ENCODE measurements at regions of chr3 and their contacts with region 1.

Region 1: GRCh38 chr3:146065573-146066006 is 95.4 kb downstream of the PLOD2 start:
- DNase-seq: no peak
- H3K4me3 ChIP-seq: no peak overlapping the region
- H3K27ac ChIP-seq: no peak overlapping the region
- H3K4me1 ChIP-seq: no peaks in the 10 kb centered on the region
- H3K27me3 ChIP-seq: no peaks in the 10 kb centered on the region
- CTCF ChIP-seq: peak; percentile 58 to 73 (median 70)
- POLR2A ChIP-seq: no peak

Region 2: DNA sequence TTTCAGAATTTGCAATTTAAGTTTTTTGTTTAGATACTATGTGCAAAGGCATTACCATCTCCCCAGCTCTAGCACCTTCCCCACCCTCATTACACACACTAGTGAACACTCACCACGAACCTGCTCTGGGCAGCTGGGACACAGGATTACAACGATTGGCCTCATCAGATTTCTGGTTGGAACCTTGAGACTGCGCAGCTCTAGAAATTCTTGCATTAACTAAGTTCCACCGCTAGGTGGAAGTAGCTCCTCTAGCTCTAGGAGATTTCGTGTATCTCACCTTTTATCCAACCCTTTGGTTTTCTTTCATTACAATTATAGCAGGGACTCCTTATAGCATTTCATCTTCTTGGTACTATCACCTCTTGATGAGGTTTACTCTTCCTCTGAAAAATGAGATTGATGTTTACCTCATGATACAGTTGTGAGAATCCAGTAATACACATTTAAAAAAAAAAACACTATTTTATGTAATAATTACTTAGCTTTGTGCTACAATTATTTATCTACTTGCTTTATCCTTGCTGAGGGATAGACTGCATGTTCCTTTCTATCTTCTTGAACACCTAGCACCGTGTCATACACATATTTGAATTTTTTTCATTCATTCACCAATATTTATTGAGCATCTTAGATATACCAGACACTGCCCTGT is 124.1 kb after region 1 on chr3:
- intact Hi-C with region 1: loop called (anchors 5 kb)
- DNase-seq: no peak
- H3K4me3 ChIP-seq: no peak overlapping the region
- H3K27ac ChIP-seq: no peak overlapping the region
- H3K4me1 ChIP-seq: no peaks in the 10 kb centered on the region
- H3K27me3 ChIP-seq: no peaks in the 10 kb centered on the region
- CTCF ChIP-seq: peak; percentile 40 to 57 (median 55)
- POLR2A ChIP-seq: no peak

Measured in breast epithelium (tissue), 4 donors.